HAP-1 (cell line): ENCODE measurements at regions of chr5 and their contacts with region 1.

Region 1: GRCh38 chr5:15383469-15383868 is 116.5 kb upstream of the FBXL7 start:
- DNase-seq: peak; percentile 17 to 19
- H3K4me3 ChIP-seq: no peak overlapping the region
- H3K4me1 ChIP-seq: no peaks in the 10 kb centered on the region
- H3K27me3 ChIP-seq: no peaks in the 10 kb centered on the region

Region 2: DNA sequence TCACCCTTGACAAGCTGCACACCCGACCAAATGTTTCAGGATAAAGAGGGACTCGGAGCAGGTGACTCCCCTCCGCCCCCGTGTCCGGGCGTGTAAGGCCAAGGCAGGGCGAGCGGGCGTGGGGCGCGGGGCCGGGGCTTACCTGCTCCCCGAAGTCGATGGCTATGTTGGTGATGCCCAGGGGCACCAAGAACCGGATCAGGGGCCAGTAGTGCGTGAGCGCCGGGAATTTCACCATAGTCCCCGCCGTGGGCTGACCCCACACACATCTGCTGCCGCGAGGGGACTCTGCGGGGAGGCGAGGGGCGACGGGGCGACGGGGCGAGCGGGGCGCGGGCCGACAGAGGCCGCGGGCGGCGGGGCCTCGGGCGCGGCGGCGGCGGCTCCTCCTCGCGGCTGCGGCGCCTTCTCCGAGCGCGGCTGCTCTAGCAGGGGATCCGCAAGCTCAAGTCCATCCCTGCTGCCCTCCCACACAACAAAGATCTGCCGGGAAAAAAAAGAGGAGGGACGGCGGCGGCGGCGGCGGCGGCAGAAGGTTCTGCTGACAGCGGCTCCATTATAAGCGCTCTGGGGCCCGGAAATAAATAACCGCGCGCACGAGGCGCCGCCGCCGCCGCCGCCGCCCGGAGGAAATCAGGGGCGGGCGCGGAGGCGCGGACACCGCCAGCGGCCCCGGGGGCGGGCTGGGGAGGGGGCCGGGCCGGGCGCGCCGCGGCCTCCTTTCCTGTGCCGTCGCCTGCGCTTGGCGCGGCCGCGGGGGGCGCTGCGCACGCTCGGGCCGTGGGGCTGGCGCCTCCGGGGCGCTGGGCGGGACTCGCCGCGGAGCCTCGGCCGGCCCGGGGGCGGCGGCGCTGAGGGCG is 512.0 kb before region 1 on chr5 and contains the start of gene ANKH:
- in situ Hi-C with region 1: no loop called
- DNase-seq: peak; percentile 59 to 79
- H3K4me3 ChIP-seq: peak within 1 kb of the TSS; percentile 56
- H3K4me1 ChIP-seq: no peaks in the 10 kb centered on the region
- H3K27me3 ChIP-seq: no peaks in the 10 kb centered on the region

Region 3: GRCh38 chr5:15794052-15794985 is 410.9 kb after region 1 on chr5:
- in situ Hi-C with region 1: loop called (anchors 25 kb)
- DNase-seq: peak in 1 of 2 experiments; percentile 47
- H3K4me3 ChIP-seq: no peak overlapping the region
- H3K4me1 ChIP-seq: peaks cover 6% of the 10 kb centered on the region; the same call in 1 of the 2 replicates
- H3K27me3 ChIP-seq: no peaks in the 10 kb centered on the region

Region 4: DNA sequence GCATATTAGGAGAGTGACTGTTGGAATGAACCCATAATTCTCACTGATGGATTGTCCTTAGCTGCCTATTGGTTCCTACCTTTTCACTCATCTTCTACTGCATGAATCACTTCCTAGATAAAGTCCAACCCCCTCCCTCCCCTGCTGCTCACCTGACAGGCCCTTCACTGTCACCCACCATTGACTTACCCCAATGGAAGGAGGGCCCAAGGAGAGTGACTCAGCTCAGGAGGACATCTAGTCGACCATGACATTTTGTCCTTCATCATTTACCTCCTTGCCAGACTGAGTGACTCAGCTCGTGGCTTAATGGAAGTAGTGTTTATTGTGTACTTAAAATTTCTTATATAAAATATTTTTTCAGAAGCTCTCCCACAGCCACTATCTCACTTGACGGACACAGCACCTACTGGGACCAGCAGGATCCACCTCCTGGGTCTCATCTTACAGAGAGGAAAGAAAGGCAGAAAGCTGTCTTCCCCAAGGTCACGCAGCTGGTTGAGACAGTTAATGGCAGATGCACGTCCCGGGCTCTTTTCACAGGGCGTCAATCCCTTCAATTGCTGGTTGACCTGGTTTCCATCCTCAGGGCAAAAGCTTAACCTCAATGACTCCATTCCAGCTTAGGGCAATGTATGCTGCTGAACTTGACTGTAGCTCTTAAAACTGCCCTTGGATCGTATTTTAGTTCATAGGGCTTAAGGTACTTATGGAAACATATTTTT is 653.8 kb after region 1 on chr5:
- in situ Hi-C with region 1: no loop called
- DNase-seq: no peak
- H3K4me3 ChIP-seq: no peak overlapping the region
- H3K4me1 ChIP-seq: no peaks in the 10 kb centered on the region
- H3K27me3 ChIP-seq: peaks cover 3% of the 10 kb centered on the region; the same call in 1 of the 2 replicates